Sigmoid colon (tissue), 7 donors: ENCODE measurements at regions of chr6 and their contacts with region 1.

Region 1: DNA sequence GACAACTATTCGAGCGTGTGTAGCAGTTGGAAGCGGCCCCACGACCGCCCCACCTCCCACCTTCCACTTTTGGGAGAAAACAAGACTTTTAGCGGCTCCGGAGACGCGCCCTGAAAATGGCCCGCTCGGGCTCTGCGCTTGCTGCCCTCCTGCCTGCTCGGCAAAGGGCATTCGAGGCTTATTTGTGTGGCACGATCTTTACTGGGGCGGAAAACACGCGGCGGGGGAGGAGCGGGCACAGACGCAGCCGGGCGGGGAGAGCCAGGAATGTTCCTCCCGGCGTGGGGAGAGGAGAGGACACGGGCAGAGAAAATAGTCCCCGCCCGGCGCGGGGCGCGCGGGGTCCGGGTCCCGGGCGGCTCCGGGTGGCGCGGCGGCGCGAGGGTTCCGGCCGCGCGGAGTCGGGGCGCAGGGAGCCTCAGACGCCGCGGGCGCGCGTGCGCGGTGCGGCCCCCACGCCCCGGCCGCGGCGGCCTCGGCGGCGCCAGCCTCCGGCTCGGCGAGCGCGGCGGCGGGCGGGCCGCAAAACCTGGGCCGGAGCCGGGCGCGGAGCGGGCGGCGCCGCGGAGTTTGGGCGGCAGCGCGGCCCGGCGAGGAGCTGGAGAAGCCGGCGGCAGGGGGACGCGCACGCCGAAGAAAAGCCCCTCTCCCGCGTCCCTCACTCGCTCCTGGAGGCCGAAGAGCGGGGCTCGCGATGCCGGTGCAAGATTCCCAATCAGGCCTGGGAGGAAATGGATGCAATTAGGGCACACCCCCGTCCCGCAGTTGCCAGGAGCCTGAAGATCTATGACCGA is 90.0 kb upstream of the ARID1B start:
- DNase-seq: peak; percentile 97
- H3K4me3 ChIP-seq: peak overlapping the region; percentile 60 to 76 (median 71)
- H3K27ac ChIP-seq: peak overlapping the region; percentile 94 to 99 (median 96)
- H3K4me1 ChIP-seq: peaks cover 0 to 16% (median 10%) of the 10 kb centered on the region in 4 donors
- H3K27me3 ChIP-seq: no peaks in the 10 kb centered on the region
- CTCF ChIP-seq: no peak
- EP300 ChIP-seq: peak in 1 of 4 donors; percentile 28
- POLR2A ChIP-seq: peak; percentile 84 to 89

Region 2: DNA sequence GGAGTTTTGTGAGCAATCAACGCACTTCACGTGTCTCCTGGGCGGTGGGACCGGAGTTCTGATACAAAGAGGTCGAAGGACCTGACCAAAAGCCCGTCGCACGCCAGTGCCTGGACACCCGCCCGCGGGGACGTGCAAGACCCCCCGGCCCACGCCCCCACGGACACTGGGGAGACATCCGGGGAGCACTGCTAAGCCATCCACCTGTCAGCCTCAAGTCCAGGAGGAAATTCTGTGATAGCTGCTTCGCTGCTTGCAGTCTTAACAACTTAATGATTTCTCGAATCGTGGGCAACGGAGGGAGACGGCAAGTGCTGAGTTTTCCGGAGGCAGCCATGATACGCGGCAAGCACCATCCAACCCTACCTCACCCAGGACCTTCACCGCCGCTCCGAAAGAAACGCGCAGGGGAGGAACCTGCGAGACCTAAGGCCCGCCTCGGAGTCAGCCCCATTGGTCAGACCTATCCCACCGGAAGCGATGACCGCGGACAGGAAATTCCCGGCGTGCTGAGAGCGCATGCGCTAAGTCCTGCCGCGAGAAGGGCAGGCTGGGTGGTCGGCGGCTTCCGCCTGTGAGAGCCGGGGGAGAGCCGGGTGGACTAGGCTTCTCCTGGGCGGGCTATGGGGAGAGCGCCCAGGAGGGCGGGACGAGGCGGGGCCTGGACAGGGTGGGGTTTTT is 1373.0 kb before region 1 on chr6 and contains the start of gene TFB1M:
- intact Hi-C with region 1: loop called (anchors 10 kb)
- DNase-seq: peak; percentile 99
- H3K4me3 ChIP-seq: peak within 1 kb of the TSS; percentile 59 to 83 (median 76)
- H3K27ac ChIP-seq: peak within 1 kb of the TSS; percentile 83 to 91 (median 88)
- H3K4me1 ChIP-seq: peaks cover 0 to 20% (median 4%) of the 10 kb centered on the region in 4 donors
- H3K27me3 ChIP-seq: no peaks in the 10 kb centered on the region
- CTCF ChIP-seq: no peak
- EP300 ChIP-seq: peak in 2 of 4 donors; percentile 9 to 17
- POLR2A ChIP-seq: peak; percentile 56 to 73
- total RNA-seq, gene TFB1M: 10.7 to 22.2 (median 16.8) TPM

Region 3: GRCh38 chr6:156316583-156317125 is 370.5 kb before region 1 on chr6:
- intact Hi-C with region 1: no loop called
- DNase-seq: no peak
- H3K4me3 ChIP-seq: no peak overlapping the region
- H3K27ac ChIP-seq: no peak overlapping the region
- H3K4me1 ChIP-seq: no peaks in the 10 kb centered on the region
- H3K27me3 ChIP-seq: no peaks in the 10 kb centered on the region
- CTCF ChIP-seq: no peak
- EP300 ChIP-seq: no peak
- POLR2A ChIP-seq: no peak

Region 4: DNA sequence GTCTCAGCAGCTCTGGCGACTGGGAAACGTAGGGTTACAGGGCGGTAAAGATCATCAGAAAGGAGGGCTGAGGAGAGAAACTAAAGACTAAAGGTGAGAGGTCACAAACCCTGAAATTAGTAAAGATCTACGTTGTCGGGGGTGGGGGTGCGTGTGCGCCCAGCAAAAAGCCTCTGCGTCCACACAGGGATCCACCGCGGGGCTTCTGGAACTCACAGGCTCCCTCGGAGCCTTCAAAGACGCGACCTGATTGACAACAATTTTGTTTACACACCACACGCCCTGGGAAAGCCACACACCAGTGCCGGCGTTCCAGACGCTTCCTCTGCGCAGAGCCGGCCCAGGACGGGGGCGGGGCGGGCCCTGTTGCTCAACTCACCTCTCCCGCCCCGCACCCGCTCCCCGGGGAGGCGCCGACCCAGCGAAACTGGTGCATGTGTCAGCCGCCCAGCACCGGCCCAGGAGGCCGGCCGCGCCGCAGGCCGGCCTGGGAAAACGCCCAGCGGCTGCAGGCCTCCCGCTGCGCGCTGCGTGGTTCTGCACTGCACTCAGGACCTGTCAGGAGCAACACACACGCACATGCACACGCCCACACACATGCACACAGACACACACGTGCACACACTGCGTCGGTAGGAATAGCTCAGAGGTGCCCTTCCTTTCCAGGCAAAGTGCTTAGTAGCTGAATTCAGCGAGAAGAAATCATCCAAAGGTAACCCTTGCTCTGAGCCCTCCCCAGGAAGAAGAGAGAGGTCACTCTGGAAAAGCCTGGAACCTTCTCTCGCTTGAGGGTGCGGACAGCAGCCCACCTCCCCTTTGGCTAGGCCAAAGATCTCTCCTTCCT is 32.8 kb after region 1 on chr6:
- intact Hi-C with region 1: loop called (anchors 1 kb)
- DNase-seq: peak; percentile 98
- H3K4me3 ChIP-seq: peak overlapping the region; percentile 28 to 51 (median 41)
- H3K27ac ChIP-seq: peak overlapping the region; percentile 80 to 92 (median 90)
- H3K4me1 ChIP-seq: peaks cover 0 to 25% (median 24%) of the 10 kb centered on the region in 4 donors
- H3K27me3 ChIP-seq: no peaks in the 10 kb centered on the region
- CTCF ChIP-seq: no peak
- EP300 ChIP-seq: peak in 1 of 4 donors; percentile 63
- POLR2A ChIP-seq: peak; percentile 21 to 33

Region 5: GRCh38 chr6:156760377-156760776 is 73.2 kb after region 1 on chr6:
- intact Hi-C with region 1: no loop called
- DNase-seq: no peak
- H3K4me3 ChIP-seq: no peak overlapping the region
- H3K27ac ChIP-seq: no peak overlapping the region
- H3K4me1 ChIP-seq: no peaks in the 10 kb centered on the region
- H3K27me3 ChIP-seq: no peaks in the 10 kb centered on the region
- CTCF ChIP-seq: no peak
- EP300 ChIP-seq: no peak
- POLR2A ChIP-seq: no peak

Region 6: DNA sequence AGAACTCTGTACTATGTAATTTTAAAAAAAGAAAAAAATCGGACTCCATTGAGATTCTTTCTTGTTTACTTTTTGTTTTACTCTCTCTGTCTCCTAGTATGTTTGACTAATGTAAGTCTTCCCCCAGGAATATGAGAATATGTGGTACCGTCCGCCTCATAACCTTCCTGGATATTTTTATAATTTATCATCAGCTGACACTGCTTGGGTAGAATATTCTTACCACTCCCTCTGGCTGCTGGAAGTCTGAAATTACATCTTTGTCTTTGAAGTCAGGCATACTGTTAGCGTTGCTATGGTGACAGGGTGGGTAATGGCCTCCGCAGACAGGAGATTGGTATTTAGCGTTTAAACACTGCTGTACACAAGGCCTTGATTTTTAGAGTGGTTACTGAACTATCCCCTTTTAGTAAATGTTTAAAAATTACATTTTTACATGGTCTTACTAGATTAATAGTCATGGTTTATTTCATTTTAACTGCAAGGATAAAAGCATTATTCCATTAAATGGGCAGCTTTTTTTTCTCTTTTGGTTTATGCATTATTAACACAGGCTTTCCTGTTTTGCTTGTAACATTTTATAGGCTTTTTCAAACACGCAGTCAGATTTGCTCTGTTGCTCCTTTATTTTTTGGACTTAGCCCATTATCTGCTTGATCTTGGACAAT is 266.4 kb after region 1 on chr6:
- intact Hi-C with region 1: loop called (anchors 2 kb)
- DNase-seq: no peak
- H3K4me3 ChIP-seq: no peak overlapping the region
- H3K27ac ChIP-seq: peak overlapping the region; percentile 34 to 73 (median 54)
- H3K4me1 ChIP-seq: peaks cover 0 to 82% (median 76%) of the 10 kb centered on the region in 4 donors
- H3K27me3 ChIP-seq: no peaks in the 10 kb centered on the region
- CTCF ChIP-seq: peak in 3 of 4 experiments; percentile 29 to 33 (median 31)
- EP300 ChIP-seq: no peak
- POLR2A ChIP-seq: no peak

Region 7: DNA sequence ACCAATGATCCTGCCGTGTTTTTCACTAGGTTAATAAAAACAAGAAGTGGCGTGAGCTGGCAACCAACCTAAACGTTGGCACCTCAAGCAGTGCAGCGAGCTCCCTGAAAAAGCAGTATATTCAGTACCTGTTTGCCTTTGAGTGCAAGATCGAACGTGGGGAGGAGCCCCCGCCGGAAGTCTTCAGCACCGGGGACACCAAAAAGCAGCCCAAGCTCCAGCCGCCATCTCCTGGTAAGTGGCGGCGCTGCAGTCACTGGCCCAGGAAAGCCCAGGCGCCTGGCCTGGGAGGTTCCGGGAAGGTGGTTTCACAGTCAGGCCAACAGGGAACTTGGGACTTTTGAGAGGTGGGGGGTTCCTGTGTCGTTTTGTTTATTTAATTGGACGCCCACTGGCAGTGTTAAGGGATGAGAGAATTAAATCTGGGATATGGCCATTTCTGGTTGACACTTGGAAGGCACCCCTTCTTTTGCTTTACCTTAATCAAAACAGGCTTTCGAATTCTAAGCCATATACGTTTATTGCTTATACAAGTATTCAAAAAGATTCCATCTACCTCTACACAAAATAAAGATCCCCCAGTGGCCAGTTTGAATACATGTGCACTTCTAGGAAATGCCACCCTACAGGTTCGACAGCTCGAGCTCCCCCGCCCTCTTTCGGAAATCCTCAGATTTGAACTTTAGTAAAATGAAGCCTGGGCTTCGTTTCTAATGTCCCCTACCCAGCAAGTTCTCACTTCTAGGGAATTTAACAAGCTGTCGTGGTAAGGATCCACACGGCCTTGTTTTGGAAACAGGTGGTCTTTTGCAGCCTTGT is 497.2 kb after region 1 on chr6:
- intact Hi-C with region 1: loop called (anchors 2 kb)
- DNase-seq: peak; percentile 83
- H3K4me3 ChIP-seq: peak overlapping the region in 1 of 4 donors; percentile 19
- H3K27ac ChIP-seq: peak overlapping the region in 1 of 4 donors; percentile 1
- H3K4me1 ChIP-seq: peaks cover 0 to 30% (median 29%) of the 10 kb centered on the region in 4 donors
- H3K27me3 ChIP-seq: no peaks in the 10 kb centered on the region
- CTCF ChIP-seq: peak; percentile 78 to 92 (median 84)
- EP300 ChIP-seq: no peak
- POLR2A ChIP-seq: no peak